Endothelial cell of umbilical vein (primary cell): ENCODE measurements at regions of chr22 and their contacts with region 1.

Region 1: GRCh38 chr22:50185384-50186087 is at the start of gene TRABD:
- DNase-seq: peak; percentile 84
- H3K4me3 ChIP-seq: peak within 1 kb of the TSS; percentile 41 to 77 (median 42)
- H3K27ac ChIP-seq: peak within 1 kb of the TSS; percentile 10
- H3K4me1 ChIP-seq: peaks cover 31% of the 10 kb centered on the region
- H3K27me3 ChIP-seq: no peaks in the 10 kb centered on the region
- CTCF ChIP-seq: no peak
- POLR2A ChIP-seq: no peak
- total RNA-seq, gene TRABD: 46.8 and 48.9 TPM in 2 replicates

Region 2: DNA sequence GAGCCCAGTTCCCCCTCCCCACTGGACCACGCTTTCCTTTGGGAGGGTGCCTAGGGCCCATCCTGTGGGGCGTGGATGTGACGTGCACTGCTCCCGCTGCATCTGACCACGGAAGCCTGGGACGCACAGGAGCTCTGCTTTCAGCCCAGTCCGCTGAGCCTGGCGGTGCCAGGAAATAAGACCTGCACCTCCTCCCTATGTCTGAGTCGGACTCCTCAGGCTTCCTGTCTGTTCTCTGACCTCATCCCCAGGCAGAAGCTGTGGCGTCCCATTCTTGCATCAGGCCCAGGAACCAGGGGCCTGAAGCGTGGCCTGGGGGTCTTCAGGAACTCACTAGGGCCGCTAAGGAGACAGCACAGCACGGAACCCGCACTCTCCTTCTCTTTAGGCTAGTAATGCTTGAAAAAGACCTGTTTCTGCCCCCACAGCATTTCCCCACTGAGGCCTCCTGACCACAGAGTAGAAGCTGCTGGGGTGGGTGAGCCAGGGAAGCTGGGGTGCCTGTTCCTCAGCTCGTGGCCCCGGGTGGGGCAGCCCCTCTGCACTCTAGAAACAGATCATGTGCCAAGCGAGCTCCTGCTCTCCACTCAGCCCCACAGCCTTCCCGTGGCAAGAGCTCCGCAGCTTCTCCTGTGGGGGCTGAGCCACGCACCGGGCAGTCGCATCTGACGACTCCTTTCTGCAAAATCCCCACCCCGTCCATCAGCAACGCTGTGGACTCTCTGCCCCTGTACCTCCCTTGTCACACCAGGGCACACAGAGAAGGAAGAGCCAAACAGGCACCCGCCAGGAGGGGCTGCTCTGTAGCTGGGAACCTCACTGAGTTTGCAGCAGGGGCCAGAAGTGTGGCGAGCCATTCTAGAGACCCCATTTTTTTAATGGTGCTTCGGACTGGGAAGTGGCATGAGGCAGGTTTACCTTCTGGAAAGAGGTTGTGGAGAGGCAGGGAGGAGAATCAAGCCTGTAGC is 73.1 kb before region 1 on chr22:
- CTCF ChIA-PET with region 1: no interaction called
- POLR2A ChIA-PET with region 1: no interaction called
- dilution Hi-C with region 1: no loop called
- intact Hi-C with region 1: loop called (anchors 5 kb)
- DNase-seq: peak; percentile 90
- H3K4me3 ChIP-seq: no peak overlapping the region
- H3K27ac ChIP-seq: peak overlapping the region; percentile 96
- H3K4me1 ChIP-seq: peaks cover 47% of the 10 kb centered on the region
- H3K27me3 ChIP-seq: no peaks in the 10 kb centered on the region
- CTCF ChIP-seq: no peak
- POLR2A ChIP-seq: peak; percentile 56

Region 3: GRCh38 chr22:50200461-50201190 is 15.1 kb after region 1 on chr22 and contains the start of gene SELENOO:
- CTCF ChIA-PET with region 1: interaction called, 3 read pairs
- POLR2A ChIA-PET with region 1: no interaction called
- dilution Hi-C with region 1: no loop called
- intact Hi-C with region 1: loop called (anchors 2 kb)
- DNase-seq: peak; percentile 80
- H3K4me3 ChIP-seq: peak within 1 kb of the TSS; percentile 58 to 85 (median 75)
- H3K27ac ChIP-seq: peak within 1 kb of the TSS; percentile 60
- H3K4me1 ChIP-seq: peaks cover 18% of the 10 kb centered on the region
- H3K27me3 ChIP-seq: no peaks in the 10 kb centered on the region
- CTCF ChIP-seq: no peak
- POLR2A ChIP-seq: peak; percentile 83
- total RNA-seq, gene SELENOO: 24.1 and 28.0 TPM in 2 replicates